Breast epithelium (tissue), 4 donors: ENCODE measurements at regions of chr16 and their contacts with region 1.

Region 1: DNA sequence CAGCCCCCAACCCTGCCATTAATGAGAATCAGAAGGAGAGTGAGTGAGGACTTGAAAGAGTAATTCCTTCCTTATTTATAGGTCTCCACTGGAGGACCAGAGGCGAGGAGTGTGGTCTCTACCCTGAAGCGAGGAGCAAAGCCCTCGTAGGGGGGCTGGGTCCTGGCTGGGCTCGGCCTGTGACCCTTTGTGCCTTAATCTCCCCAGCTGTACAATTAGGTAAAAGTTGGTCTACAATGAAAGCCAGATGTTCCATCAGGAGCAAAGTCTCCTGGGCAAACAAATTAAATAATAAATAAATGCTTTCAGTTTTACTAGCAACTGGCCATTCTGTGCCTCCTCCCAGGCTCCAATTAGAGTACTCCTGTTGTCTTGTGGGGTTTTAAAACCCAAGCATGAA is 523.5 kb upstream of the SALL1 start:
- DNase-seq: no peak
- H3K4me3 ChIP-seq: no peak overlapping the region
- H3K27ac ChIP-seq: no peak overlapping the region
- H3K4me1 ChIP-seq: no peaks in the 10 kb centered on the region
- H3K27me3 ChIP-seq: peaks cover 0 to 2% of the 10 kb centered on the region in 2 donors
- CTCF ChIP-seq: no peak
- POLR2A ChIP-seq: no peak

Region 2: GRCh38 chr16:51657848-51658247 is 16.8 kb before region 1 on chr16:
- intact Hi-C with region 1: loop called (anchors 1 kb)
- DNase-seq: no peak
- H3K4me3 ChIP-seq: no peak overlapping the region
- H3K27ac ChIP-seq: no peak overlapping the region
- H3K4me1 ChIP-seq: no peaks in the 10 kb centered on the region
- H3K27me3 ChIP-seq: no peaks in the 10 kb centered on the region
- CTCF ChIP-seq: no peak
- POLR2A ChIP-seq: no peak